ENCODE measurements at regions of chr20 and their contacts with region 1.

Region 1: GRCh38 chr20:37534401-37535157 is 6.9 kb upstream of the BLCAP start:
- DNase-seq: peak in 9 of 14 experiments; percentile 12 to 84 (median 34)
- ATAC-seq: peak; percentile 92
- H3K4me3 ChIP-seq: no peak overlapping the region
- H3K4me3 Mint-ChIP-seq: peak overlapping the region; percentile 1
- H3K27ac ChIP-seq: no peak overlapping the region
- H3K27ac Mint-ChIP-seq: no peak overlapping the region
- H3K4me1 ChIP-seq: no peaks in the 10 kb centered on the region
- H3K4me1 Mint-ChIP-seq: no peaks in the 10 kb centered on the region
- H3K27me3 ChIP-seq: no peaks in the 10 kb centered on the region
- H3K27me3 Mint-ChIP-seq: peaks cover 19% of the 10 kb centered on the region
- CTCF ChIP-seq: peak; percentile 89

Region 2: DNA sequence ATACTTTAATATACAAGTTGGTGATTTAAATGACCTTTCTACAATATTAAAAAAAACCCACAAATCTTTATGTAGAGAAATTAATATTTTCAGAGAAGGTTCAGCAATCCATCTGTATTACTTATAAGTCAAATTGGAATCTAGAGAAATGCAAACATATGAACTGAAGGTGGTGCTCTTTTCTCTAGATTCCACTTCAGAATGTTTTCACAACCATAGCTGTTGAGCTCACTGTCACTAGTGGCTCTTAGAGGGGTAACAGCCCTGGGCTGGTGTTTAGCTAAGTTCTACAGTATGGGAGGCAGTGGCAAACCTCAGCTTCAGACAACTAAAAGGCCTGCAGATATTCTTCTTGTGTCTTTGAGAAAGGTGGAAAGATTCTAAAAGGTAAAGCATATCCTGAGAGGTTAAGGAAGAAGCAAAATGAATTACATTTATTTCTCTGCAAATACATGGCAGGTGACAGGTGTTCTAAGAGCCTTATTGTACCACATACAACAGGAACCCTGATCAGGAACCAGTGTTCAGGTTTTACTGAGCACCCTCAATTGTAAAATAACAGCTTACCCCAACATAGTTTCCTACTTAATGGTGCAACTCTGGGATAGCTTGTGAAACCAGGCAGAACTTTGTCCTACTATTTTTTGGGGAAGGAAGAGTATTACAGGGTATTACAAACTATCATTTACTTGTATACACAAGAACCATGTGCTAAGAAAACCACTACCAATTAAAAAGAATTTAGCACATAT is 526.5 kb before region 1 on chr20:
- CTCF ChIA-PET with region 1: no interaction called
- POLR2A ChIA-PET with region 1: no interaction called
- intact Hi-C with region 1: loop called in 1 of 2 experiments (anchors 10 kb)
- DNase-seq: peak in 11 of 14 experiments; percentile 11 to 79 (median 32)
- ATAC-seq: peak; percentile 100
- H3K4me3 ChIP-seq: no peak overlapping the region
- H3K4me3 Mint-ChIP-seq: peak overlapping the region; percentile 47
- H3K27ac ChIP-seq: peak overlapping the region in 1 of 2 donors; percentile 14
- H3K27ac Mint-ChIP-seq: peak overlapping the region; percentile 84
- H3K4me1 ChIP-seq: peaks cover 13% of the 10 kb centered on the region
- H3K4me1 Mint-ChIP-seq: peaks cover 26% of the 10 kb centered on the region
- H3K27me3 ChIP-seq: no peaks in the 10 kb centered on the region
- H3K27me3 Mint-ChIP-seq: no peaks in the 10 kb centered on the region
- CTCF ChIP-seq: peak; percentile 83

Region 3: DNA sequence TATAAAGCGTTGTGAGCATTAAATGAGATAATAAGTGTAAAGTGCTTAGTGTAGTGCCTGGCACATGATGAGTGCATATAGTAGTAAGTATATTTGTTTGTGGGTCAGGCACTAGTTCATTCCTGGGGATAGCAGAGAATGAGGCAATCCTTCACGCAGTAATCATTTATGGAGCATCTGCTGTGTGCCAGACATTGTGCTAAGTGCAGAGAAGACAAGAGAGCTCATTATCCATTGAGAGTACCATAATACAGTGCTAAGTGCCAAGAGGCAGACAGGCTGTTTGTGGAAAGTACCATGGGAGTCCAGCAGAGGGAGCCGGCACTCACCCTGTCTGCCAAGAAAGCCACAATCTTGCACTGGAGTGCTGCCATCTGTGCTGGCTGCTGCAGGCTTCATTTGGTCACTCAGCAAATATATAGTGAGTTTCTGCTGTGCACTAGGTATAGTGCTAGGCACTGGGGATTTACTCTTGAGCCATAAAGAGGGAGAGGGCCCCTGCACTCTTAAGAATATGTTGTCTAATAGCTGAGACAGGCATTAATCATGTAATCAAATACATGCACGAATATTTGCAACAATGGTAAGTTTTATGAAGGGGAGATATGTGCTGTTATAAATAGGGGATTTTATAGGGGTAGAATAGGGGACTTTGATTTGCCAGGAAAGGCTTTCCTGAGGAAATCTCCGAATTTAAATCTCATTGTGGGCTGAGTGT is 342.3 kb before region 1 on chr20:
- CTCF ChIA-PET with region 1: interaction called, 5 read pairs
- POLR2A ChIA-PET with region 1: interaction called, 5 read pairs
- intact Hi-C with region 1: loop called (anchors 1 kb)
- DNase-seq: peak; percentile 52 to 84 (median 66)
- ATAC-seq: peak; percentile 80
- H3K4me3 ChIP-seq: no peak overlapping the region
- H3K4me3 Mint-ChIP-seq: peak overlapping the region; percentile 6
- H3K27ac ChIP-seq: no peak overlapping the region
- H3K27ac Mint-ChIP-seq: peak overlapping the region; percentile 21
- H3K4me1 ChIP-seq: peaks cover 70% of the 10 kb centered on the region
- H3K4me1 Mint-ChIP-seq: peaks cover 69% of the 10 kb centered on the region
- H3K27me3 ChIP-seq: no peaks in the 10 kb centered on the region
- H3K27me3 Mint-ChIP-seq: no peaks in the 10 kb centered on the region
- CTCF ChIP-seq: peak; percentile 89

Region 4: DNA sequence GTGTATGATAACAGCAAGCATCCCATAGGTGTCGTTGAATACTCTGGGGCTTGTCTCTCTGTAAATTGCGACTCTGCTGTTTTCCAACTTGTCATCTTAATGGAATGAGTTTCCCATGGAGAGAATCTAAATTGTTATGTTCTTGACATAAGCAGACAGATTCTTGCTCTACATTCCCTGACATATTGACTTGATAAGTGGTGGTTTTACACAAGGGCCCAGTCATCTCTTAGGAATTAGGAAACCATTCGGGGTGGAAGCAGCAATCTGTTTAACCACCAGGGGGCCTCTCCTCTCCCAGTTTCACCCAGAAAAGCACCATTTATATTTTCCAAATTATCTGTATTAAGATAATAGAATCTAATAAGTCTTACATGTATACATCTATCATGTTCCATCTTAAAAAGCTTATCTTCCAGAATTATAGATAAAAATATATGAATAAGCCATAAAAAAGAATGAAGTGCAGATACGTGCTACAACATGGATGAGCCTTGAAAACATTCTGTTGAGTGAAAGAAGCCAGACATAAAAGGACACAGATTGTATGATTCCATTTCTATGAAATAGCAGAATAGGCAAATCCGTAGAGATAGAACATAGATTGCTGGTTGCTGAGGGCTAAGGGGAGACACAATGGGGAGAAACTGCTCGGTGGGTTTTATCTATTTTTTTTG is 332.2 kb before region 1 on chr20:
- CTCF ChIA-PET with region 1: no interaction called
- POLR2A ChIA-PET with region 1: no interaction called
- intact Hi-C with region 1: loop called in 1 of 2 experiments (anchors 1 kb)
- DNase-seq: peak in 6 of 14 experiments; percentile 15 to 61 (median 38)
- ATAC-seq: no peak
- H3K4me3 ChIP-seq: no peak overlapping the region
- H3K4me3 Mint-ChIP-seq: no peak overlapping the region
- H3K27ac ChIP-seq: no peak overlapping the region
- H3K27ac Mint-ChIP-seq: no peak overlapping the region
- H3K4me1 ChIP-seq: no peaks in the 10 kb centered on the region
- H3K4me1 Mint-ChIP-seq: peaks cover 18% of the 10 kb centered on the region
- H3K27me3 ChIP-seq: no peaks in the 10 kb centered on the region
- H3K27me3 Mint-ChIP-seq: no peaks in the 10 kb centered on the region
- CTCF ChIP-seq: peak; percentile 77

Region 5: DNA sequence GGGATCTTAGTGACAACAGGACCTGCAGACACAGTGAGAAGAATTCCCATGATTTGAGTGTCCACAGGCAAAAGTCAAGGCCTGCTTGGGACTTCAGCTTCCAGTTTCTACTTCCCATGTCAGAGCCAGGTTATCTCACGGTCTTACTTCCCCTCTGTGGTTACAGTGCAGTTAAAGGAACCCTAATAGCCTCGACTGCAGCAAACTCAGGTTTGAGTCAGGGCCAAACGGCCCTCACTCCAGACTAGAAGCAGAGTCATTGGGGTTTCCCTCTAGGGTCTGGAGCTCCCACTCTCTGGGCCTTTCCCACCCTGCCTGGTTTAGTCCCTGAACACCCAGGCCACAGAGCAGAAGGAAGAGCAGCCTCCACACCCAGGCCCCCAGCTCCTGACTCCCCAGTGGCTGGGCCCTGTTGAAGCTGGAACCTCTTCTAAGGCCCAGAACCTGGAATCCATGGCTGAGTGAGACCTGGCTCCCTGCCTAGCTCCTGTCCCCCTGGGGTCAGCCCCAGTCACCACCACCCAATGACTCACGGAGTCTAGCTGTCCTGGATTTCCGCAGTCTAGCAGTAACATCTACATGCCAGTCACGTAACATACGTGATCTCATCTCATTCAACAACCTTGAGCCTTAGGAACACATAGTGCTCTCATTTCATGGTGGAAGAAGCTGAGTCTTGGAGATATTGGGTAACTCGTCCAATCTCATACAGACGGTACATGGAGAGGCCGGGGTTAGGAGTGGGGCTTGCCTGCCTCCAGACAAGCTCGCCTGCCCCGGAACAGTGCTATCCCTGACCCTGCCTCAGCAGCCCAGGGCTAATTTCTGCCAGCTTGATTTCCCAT is 263.8 kb before region 1 on chr20:
- CTCF ChIA-PET with region 1: no interaction called
- POLR2A ChIA-PET with region 1: no interaction called
- intact Hi-C with region 1: loop called (anchors 1 kb)
- DNase-seq: peak in 2 of 14 experiments; percentile 67 to 77
- ATAC-seq: no peak
- H3K4me3 ChIP-seq: no peak overlapping the region
- H3K4me3 Mint-ChIP-seq: no peak overlapping the region
- H3K27ac ChIP-seq: no peak overlapping the region
- H3K27ac Mint-ChIP-seq: no peak overlapping the region
- H3K4me1 ChIP-seq: peaks cover 3% of the 10 kb centered on the region
- H3K4me1 Mint-ChIP-seq: no peaks in the 10 kb centered on the region
- H3K27me3 ChIP-seq: no peaks in the 10 kb centered on the region
- H3K27me3 Mint-ChIP-seq: no peaks in the 10 kb centered on the region
- CTCF ChIP-seq: no peak

Region 6: DNA sequence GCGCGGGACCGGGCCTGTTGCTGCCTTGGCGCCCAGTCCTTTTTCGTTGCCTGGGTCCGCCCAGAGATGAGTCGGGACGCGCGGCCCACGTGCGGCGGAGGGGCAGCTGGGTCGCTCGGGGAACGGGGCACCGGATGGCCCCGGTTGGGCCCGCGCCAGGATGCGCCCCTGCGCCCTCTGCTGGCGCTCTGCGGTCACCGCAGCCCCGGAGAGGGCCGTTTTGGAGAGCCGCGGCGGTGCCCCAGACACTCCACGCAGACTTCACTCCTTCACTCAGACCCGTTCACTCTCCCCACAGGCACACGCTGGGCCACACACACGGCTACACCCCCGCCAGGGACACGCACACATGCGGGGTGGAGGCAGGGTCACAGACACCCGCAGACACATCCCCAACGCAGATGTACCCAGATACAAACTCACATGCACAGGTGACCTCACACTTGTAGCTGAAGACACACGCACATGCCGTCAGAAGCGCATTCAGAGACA is 149.8 kb before region 1 on chr20:
- CTCF ChIA-PET with region 1: interaction called, 7 read pairs
- POLR2A ChIA-PET with region 1: interaction called, 3 read pairs
- intact Hi-C with region 1: loop called in 1 of 2 experiments (anchors 1 kb)
- DNase-seq: peak; percentile 46 to 87 (median 76)
- ATAC-seq: peak; percentile 96
- H3K4me3 ChIP-seq: peak overlapping the region; percentile 45
- H3K4me3 Mint-ChIP-seq: peak overlapping the region; percentile 89
- H3K27ac ChIP-seq: no peak overlapping the region
- H3K27ac Mint-ChIP-seq: peak overlapping the region; percentile 39
- H3K4me1 ChIP-seq: peaks cover 9% of the 10 kb centered on the region
- H3K4me1 Mint-ChIP-seq: peaks cover 7% of the 10 kb centered on the region
- H3K27me3 ChIP-seq: no peaks in the 10 kb centered on the region
- H3K27me3 Mint-ChIP-seq: no peaks in the 10 kb centered on the region
- CTCF ChIP-seq: peak; percentile 79

Region 7: DNA sequence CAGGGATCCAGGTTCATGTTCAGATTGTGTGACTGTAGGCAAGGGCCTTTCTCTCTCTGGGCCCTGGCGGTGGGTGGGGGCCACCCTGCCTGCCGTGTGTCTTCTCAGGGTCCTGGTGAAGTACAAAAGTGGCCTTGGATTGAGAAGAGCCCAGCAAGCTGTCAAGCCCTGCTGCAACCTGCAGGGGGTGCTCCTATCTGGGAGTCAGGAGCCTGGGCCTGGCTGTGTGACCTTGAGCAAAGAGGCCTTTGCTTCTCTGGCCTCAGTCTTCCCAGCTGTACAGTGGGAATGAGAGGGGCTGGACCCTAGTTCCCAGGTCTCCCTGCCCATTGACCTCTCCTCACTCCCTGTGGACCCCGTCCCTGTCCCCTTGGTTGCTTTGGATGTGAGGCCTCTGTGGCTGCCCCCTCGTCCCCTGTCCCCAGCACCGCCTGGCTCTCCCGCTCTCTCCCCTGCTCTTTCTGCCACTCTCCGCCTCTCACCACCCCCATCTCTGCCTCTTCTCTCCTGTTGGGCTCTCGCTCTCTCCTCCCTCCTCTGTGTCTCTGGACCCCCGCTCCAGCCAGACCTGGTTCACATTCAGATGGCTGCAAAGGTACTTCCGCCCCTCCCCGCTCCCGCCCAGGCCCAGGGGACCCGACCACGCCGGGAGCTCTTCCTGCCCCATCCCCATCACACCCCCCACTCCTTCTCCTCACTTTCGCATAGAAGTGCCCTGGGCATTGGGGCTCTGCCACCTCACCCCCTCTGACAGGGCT is 142.0 kb before region 1 on chr20:
- CTCF ChIA-PET with region 1: no interaction called
- POLR2A ChIA-PET with region 1: no interaction called
- intact Hi-C with region 1: loop called in 1 of 2 experiments (anchors 5 kb)
- DNase-seq: peak in 1 of 14 experiments; percentile 7
- ATAC-seq: no peak
- H3K4me3 ChIP-seq: no peak overlapping the region
- H3K4me3 Mint-ChIP-seq: no peak overlapping the region
- H3K27ac ChIP-seq: no peak overlapping the region
- H3K27ac Mint-ChIP-seq: no peak overlapping the region
- H3K4me1 ChIP-seq: no peaks in the 10 kb centered on the region
- H3K4me1 Mint-ChIP-seq: no peaks in the 10 kb centered on the region
- H3K27me3 ChIP-seq: no peaks in the 10 kb centered on the region
- H3K27me3 Mint-ChIP-seq: no peaks in the 10 kb centered on the region
- CTCF ChIP-seq: no peak

Region 8: GRCh38 chr20:37475252-37475651 is 59.3 kb before region 1 on chr20:
- CTCF ChIA-PET with region 1: no interaction called
- POLR2A ChIA-PET with region 1: no interaction called
- intact Hi-C with region 1: no loop called
- DNase-seq: no peak
- ATAC-seq: no peak
- H3K4me3 ChIP-seq: no peak overlapping the region
- H3K4me3 Mint-ChIP-seq: no peak overlapping the region
- H3K27ac ChIP-seq: no peak overlapping the region
- H3K27ac Mint-ChIP-seq: no peak overlapping the region
- H3K4me1 ChIP-seq: no peaks in the 10 kb centered on the region
- H3K4me1 Mint-ChIP-seq: no peaks in the 10 kb centered on the region
- H3K27me3 ChIP-seq: no peaks in the 10 kb centered on the region
- H3K27me3 Mint-ChIP-seq: peaks cover 28% of the 10 kb centered on the region
- CTCF ChIP-seq: no peak

Region 9: GRCh38 chr20:37498066-37498665 is 36.4 kb before region 1 on chr20:
- CTCF ChIA-PET with region 1: no interaction called
- POLR2A ChIA-PET with region 1: no interaction called
- intact Hi-C with region 1: no loop called
- DNase-seq: no peak
- ATAC-seq: no peak
- H3K4me3 ChIP-seq: no peak overlapping the region
- H3K4me3 Mint-ChIP-seq: no peak overlapping the region
- H3K27ac ChIP-seq: no peak overlapping the region
- H3K27ac Mint-ChIP-seq: no peak overlapping the region
- H3K4me1 ChIP-seq: no peaks in the 10 kb centered on the region
- H3K4me1 Mint-ChIP-seq: no peaks in the 10 kb centered on the region
- H3K27me3 ChIP-seq: no peaks in the 10 kb centered on the region
- H3K27me3 Mint-ChIP-seq: no peaks in the 10 kb centered on the region
- CTCF ChIP-seq: no peak